ENCODE measurements at regions of chr18 and their contacts with region 1.

Region 1: DNA sequence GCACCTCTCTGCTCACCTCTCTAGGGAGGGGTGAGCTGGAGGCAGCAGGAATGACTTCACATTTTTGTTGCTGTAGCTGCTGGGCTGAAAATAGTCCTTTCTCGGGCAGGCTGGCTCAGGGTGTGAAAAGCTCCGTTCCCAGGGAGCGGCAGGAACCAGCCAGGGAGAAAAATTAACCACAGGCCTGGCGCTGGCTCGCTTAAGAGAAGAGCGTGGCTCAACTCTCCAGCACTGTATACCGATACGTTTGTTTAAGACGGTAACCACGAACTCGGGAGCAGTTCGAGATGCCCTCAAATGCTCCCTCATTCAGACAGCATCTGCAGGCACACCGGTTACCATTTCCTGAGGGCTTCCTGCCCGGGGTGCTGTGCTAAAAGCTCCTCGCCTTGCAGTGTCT is 129.6 kb downstream of the CELF4 start:
- DNase-seq: no peak
- ATAC-seq: peak in 3 of 4 donors; percentile 37 to 73 (median 71)
- H3K4me3 ChIP-seq: no peak overlapping the region
- H3K27ac ChIP-seq: no peak overlapping the region
- H3K4me1 ChIP-seq: peaks cover 0 to 16% (median 0%) of the 10 kb centered on the region in 12 donors
- H3K27me3 ChIP-seq: no peaks in the 10 kb centered on the region
- CTCF ChIP-seq: no peak
- POLR2A ChIP-seq: no peak

Region 2: DNA sequence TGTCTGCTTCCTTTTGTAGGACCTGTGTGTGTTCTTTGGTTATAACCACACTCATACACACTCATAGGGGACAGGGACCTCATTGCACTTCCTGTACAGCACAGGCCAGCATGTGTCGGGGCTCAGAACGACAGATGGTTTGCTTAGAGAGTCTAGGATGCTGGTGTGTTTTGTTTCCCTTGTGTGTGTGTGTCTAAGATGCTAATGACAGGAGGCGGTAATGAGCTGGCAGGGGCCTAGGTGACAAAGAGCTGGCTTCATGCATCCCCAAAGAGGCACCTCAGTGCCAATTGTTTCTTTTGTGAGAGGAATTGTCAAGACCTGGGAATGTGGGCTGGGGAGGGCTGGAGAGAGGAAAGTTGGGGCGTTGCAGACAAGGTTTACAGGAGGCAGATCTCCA is 63.0 kb after region 1 on chr18:
- intact Hi-C with region 1: loop called in 1 of 10 experiments (anchors 10 kb)
- DNase-seq: no peak
- ATAC-seq: no peak
- H3K4me3 ChIP-seq: no peak overlapping the region
- H3K27ac ChIP-seq: no peak overlapping the region
- H3K4me1 ChIP-seq: no peaks in the 10 kb centered on the region
- H3K27me3 ChIP-seq: peaks cover 0 to 14% (median 0%) of the 10 kb centered on the region in 9 donors
- CTCF ChIP-seq: no peak
- POLR2A ChIP-seq: no peak

Measured in heart left ventricle (tissue), 16 donors.